HEK293 (cell line): ENCODE measurements at regions of chr2 and their contacts with region 1.

Region 1: GRCh38 chr2:101993772-101994171 is 2.0 kb downstream of the IL1R2 start:
- H3K4me3 ChIP-seq: no peak overlapping the region
- H3K27ac ChIP-seq: no peak overlapping the region
- H3K4me1 ChIP-seq: no peaks in the 10 kb centered on the region
- CTCF ChIP-seq: no peak

Region 2: GRCh38 chr2:102005989-102006885 is 12.5 kb after region 1 on chr2:
- CTCF ChIA-PET with region 1: interaction called, 11 read pairs
- POLR2A ChIA-PET with region 1: no interaction called
- H3K4me3 ChIP-seq: no peak overlapping the region
- H3K27ac ChIP-seq: no peak overlapping the region
- H3K4me1 ChIP-seq: no peaks in the 10 kb centered on the region
- CTCF ChIP-seq: peak; percentile 19; the same call in 1 of the 2 replicates

Region 3: GRCh38 chr2:102063941-102064678 is 70.3 kb after region 1 on chr2:
- CTCF ChIA-PET with region 1: no interaction called
- POLR2A ChIA-PET with region 1: no interaction called
- H3K4me3 ChIP-seq: no peak overlapping the region
- H3K27ac ChIP-seq: no peak overlapping the region
- H3K4me1 ChIP-seq: no peaks in the 10 kb centered on the region
- CTCF ChIP-seq: no peak